HepG2 (cell line): ENCODE measurements at regions of chr20 and their contacts with region 1.

Region 1: DNA sequence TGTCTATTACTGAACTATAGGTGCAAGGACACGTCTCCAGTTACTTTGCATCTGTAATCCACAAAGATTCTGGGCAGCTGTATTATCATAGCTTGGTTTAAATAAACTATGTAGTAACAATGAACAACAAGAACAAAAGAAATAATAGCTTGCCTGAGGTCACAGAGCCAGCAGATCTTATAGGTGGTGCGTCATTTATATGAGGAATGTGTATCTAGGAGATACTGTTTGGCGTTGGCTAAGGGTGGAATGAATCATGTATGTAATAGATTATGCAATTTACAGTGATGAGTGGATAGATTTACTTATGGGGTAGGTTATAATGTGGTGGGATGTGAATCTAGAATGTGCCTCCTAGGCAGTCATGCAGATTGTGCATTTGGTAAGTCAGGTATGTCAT is 42.8 kb downstream of the HNF4A start:
- DNase-seq: no peak
- ATAC-seq: no peak
- H3K4me3 ChIP-seq: no peak overlapping the region
- H3K27ac ChIP-seq: no peak overlapping the region
- H3K4me1 ChIP-seq: peaks cover 85% of the 10 kb centered on the region
- H3K27me3 ChIP-seq: no peaks in the 10 kb centered on the region; a peak in 1 of 5 replicates
- CTCF ChIP-seq: no peak
- EP300 ChIP-seq: no peak
- POLR2A ChIP-seq: no peak
- RAD21 ChIP-seq: no peak

Region 2: DNA sequence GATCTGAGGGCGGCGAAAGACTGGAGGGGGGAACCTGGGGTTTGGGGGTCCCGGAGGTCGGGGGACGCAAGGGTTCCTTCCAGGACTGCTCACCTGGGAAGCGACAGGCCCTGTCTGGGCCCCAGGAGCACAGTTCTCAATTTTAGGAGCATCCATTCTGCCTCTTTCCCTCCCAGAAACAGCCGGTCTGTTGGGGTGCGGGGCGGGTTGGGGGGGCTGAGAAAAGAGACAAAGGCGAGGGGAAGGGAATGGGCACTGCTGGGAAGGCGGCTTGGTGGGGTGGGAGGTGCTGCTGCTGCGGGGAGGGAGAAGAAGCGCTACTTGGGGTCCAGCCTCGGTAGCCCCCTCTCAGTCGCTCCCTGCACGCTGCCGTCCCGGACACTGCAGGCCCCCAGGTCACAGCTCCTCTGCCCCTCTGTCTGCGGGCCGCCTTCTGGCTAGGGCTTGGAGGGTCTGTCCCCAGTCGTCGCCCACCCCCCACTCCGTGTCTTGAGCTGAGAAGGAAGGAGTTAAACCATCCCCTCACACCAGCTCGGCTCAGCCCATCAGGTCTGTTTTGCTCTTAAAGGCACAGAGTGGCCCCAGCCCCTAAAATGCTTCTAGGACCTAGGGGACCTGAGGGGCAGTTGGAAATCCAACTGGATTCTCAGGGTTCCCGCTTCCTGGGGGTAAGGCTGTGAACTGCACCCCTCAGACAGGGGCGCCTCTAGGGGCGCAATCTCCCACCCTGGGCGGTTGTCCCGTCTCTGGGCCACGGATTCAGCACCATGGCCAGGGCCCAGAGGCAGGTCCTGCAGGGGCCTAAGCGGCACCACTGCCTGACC is 150.5 kb before region 1 on chr20:
- CTCF ChIA-PET with region 1: no interaction called
- POLR2A ChIA-PET with region 1: no interaction called
- in situ Hi-C with region 1: no loop called
- intact Hi-C with region 1: no loop called
- DNase-seq: peak; percentile 80
- ATAC-seq: peak; percentile 99
- H3K4me3 ChIP-seq: no peak overlapping the region
- H3K27ac ChIP-seq: no peak overlapping the region
- H3K4me1 ChIP-seq: no peaks in the 10 kb centered on the region
- H3K27me3 ChIP-seq: no peaks in the 10 kb centered on the region; a peak in 2 of 5 replicates
- CTCF ChIP-seq: peak; percentile 87
- EP300 ChIP-seq: peak in 1 of 2 experiments; percentile 64; a peak in 1 of 4 replicates
- POLR2A ChIP-seq: no peak
- RAD21 ChIP-seq: peak; percentile 95

Region 3: DNA sequence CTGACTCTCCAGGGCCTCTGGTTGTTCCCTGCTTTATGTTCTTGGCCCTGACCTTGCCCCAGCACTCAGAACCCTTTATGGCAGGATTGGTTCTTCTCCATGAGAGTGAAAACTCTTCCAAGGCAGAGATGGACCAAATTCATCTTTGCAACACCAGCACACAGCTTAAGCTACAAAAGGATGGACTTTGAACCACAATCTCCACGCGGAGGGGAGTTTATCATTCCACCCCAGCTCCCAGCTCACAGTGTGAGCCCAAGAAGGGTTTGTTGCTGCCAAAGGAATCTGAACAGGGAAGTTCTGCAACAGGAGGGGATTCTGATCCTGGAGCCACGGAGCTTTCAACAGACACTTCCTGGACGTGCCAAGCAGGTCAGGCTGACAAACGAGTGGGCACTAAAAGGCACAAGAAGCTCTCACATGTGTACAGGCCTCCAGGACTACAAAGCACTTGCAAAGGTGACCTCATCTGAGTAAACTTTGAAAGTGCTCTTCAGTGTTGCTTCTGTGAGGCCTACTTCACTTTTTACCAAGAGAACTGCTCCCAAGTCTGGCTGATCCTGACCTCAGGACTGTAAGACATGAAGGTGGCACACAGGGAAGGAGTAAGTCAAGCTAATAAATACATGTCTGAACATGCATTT is 96.2 kb before region 1 on chr20:
- CTCF ChIA-PET with region 1: no interaction called
- POLR2A ChIA-PET with region 1: interaction called, 11 read pairs
- in situ Hi-C with region 1: no loop called
- intact Hi-C with region 1: no loop called
- DNase-seq: peak; percentile 96
- ATAC-seq: peak; percentile 97
- H3K4me3 ChIP-seq: peak overlapping the region; percentile 20 to 45 (median 40)
- H3K27ac ChIP-seq: peak overlapping the region; percentile 82
- H3K4me1 ChIP-seq: peaks cover 27% of the 10 kb centered on the region
- H3K27me3 ChIP-seq: no peaks in the 10 kb centered on the region
- CTCF ChIP-seq: no peak; the same call in 1 of the 2 replicates
- EP300 ChIP-seq: peak; percentile 75 to 84
- POLR2A ChIP-seq: peak in 1 of 2 experiments; percentile 81; a peak in 2 of 4 replicates
- RAD21 ChIP-seq: no peak

Region 4: GRCh38 chr20:44415833-44416715 is 17.8 kb after region 1 on chr20:
- CTCF ChIA-PET with region 1: no interaction called
- POLR2A ChIA-PET with region 1: interaction called, 556 read pairs
- in situ Hi-C with region 1: no loop called
- intact Hi-C with region 1: loop called (anchors 1 kb)
- DNase-seq: no peak
- ATAC-seq: no peak
- H3K4me3 ChIP-seq: no peak overlapping the region
- H3K27ac ChIP-seq: peak overlapping the region; percentile 87
- H3K4me1 ChIP-seq: peaks cover 89% of the 10 kb centered on the region
- H3K27me3 ChIP-seq: no peaks in the 10 kb centered on the region
- CTCF ChIP-seq: no peak
- EP300 ChIP-seq: no peak
- POLR2A ChIP-seq: peak in 1 of 2 experiments; percentile 33; a peak in 2 of 4 replicates
- RAD21 ChIP-seq: no peak

Region 5: DNA sequence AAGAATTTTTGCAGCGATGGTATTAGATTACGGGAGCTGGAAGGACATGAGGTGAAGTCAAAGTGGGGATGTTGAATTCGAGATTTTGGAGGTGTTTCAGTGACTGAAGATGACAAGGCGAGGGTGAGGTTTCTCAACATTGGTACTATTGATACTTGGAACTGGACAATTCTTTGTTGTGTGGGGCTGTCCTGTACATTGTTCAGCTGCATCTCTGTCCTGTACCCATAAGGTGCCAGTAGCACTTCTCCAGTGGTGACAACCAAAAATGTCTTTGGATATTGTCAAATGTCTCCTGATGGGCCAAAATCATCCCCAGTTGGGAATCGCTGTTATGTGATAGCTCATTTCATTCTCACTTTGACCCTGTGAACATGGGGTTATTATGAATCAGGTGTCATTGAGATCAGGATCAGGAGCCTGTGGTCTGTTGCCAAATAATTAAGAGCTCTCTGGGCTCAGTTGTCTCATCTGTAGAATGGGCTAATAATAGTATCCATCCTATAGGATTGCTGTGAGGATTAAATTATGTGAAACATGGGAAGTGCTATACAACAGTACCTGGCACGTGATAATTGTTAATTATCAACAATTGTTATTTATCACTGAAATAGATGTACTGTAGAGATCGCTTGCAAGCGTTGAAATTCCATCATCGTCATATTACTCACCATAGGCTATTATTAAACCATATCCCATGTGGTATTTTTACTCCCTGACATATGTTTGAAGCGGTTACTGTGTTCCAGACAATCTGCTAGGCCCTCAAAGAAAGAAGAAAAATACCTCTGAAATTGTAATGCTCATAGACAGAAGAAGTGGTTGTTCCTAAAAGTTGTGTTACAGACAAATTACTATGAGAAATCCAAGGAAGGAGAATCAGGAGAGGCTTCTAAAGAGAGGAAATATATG is 28.8 kb after region 1 on chr20:
- CTCF ChIA-PET with region 1: no interaction called
- POLR2A ChIA-PET with region 1: interaction called, 26 read pairs
- in situ Hi-C with region 1: no loop called
- intact Hi-C with region 1: no loop called
- DNase-seq: no peak
- ATAC-seq: no peak
- H3K4me3 ChIP-seq: no peak overlapping the region
- H3K27ac ChIP-seq: peak overlapping the region; percentile 60
- H3K4me1 ChIP-seq: peaks cover 80% of the 10 kb centered on the region
- H3K27me3 ChIP-seq: no peaks in the 10 kb centered on the region
- CTCF ChIP-seq: no peak
- EP300 ChIP-seq: no peak
- POLR2A ChIP-seq: no peak; a peak in 1 of 4 replicates
- RAD21 ChIP-seq: no peak

Region 6: DNA sequence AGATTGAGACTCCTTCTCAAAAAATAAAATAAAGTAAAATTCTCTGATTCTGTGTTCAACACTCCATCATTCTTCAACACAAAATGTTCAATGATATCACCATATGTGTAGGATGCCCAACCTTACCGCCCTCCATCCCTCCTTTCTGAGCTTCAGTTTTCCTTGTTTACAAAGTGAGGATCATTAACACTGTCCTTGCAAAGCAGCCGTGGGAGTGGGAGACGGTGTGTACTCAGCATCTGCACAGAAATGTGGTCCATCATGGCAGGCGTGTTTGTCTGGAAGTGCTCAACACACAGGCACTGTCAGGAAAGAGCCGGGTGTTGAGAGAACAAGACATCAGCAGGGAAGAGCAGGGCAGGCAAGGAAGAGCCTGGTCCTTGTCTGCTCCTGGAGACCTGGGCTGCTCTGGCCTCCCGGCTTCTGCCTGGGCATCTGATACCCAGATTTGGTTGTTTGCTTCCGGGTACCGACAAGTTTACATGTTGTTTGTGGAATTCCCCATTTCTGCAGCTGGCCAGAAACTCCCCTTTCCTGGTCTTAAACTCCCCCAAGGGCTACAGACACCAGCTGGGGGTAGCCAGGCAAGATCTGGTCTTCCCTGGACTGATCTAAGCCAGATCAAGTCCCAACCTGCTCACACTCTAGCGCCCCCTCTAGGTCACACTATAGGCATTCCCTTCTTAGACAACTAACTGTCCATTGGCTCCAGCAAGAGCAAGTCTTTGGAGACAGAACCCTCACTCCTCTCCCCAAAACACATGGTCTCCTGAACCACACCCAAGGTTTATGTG is 50.6 kb after region 1 on chr20:
- CTCF ChIA-PET with region 1: no interaction called
- POLR2A ChIA-PET with region 1: interaction called, 8 read pairs
- in situ Hi-C with region 1: no loop called
- intact Hi-C with region 1: loop called (anchors 5 kb)
- DNase-seq: peak; percentile 68
- ATAC-seq: peak; percentile 54
- H3K4me3 ChIP-seq: no peak overlapping the region
- H3K27ac ChIP-seq: no peak overlapping the region
- H3K4me1 ChIP-seq: peaks cover 69% of the 10 kb centered on the region
- H3K27me3 ChIP-seq: no peaks in the 10 kb centered on the region
- CTCF ChIP-seq: peak; percentile 72
- EP300 ChIP-seq: no peak
- POLR2A ChIP-seq: no peak
- RAD21 ChIP-seq: peak; percentile 58

Region 7: DNA sequence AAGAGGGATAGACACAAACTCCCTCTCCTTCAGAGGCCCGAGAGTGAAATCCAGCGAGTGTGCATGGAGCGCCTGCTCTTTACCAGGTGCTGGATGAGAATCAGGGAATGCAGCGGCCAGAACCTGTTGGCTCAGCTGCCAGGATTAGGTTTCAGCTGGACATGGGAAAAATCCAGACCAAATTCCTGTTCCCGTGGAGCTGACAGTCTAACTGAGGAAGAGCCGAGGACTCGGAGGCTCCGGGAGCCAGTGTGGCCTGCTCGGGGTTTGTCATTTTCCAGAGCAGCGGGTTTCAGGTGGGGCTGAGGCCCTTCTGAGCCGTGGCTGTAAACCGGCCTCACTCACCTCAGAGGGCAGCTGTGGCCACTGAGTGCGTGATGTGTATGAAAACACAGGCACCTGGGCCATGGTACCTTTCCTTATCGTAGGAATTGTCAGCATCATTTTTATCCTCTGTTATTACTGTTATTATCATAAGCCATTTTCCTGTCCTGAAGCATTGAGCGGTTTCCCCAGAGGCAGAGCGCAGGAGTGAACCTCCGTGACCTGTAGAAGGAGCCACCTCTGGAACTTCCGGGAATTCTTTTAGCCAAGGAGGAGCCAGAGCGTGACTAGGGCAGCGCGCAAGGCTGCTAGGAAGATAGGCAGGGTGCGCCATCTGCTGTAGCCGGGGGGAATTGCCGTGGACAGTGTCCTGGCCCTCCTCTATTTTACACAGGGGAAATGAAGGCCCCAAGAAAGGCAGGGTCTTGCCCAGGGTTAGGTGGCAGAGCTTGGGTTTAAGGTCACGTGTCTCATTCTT is 211.4 kb after region 1 on chr20:
- CTCF ChIA-PET with region 1: no interaction called
- POLR2A ChIA-PET with region 1: no interaction called
- in situ Hi-C with region 1: no loop called
- intact Hi-C with region 1: loop called (anchors 5 kb)
- DNase-seq: peak; percentile 95
- ATAC-seq: peak; percentile 97
- H3K4me3 ChIP-seq: peak overlapping the region; percentile 68 to 79 (median 74)
- H3K27ac ChIP-seq: peak overlapping the region; percentile 57
- H3K4me1 ChIP-seq: peaks cover 16% of the 10 kb centered on the region
- H3K27me3 ChIP-seq: no peaks in the 10 kb centered on the region; a peak in 1 of 5 replicates
- CTCF ChIP-seq: peak; percentile 100
- EP300 ChIP-seq: peak; percentile 28 to 40; a peak in 2 of 4 replicates
- POLR2A ChIP-seq: peak; percentile 77 to 78
- RAD21 ChIP-seq: peak; percentile 99